ENCODE measurements at regions of chr6 and their contacts with region 1.

Region 1: GRCh38 chr6:34608321-34609091 is 52.4 kb upstream of the SPDEF start:
- DNase-seq: no peak

Region 2: DNA sequence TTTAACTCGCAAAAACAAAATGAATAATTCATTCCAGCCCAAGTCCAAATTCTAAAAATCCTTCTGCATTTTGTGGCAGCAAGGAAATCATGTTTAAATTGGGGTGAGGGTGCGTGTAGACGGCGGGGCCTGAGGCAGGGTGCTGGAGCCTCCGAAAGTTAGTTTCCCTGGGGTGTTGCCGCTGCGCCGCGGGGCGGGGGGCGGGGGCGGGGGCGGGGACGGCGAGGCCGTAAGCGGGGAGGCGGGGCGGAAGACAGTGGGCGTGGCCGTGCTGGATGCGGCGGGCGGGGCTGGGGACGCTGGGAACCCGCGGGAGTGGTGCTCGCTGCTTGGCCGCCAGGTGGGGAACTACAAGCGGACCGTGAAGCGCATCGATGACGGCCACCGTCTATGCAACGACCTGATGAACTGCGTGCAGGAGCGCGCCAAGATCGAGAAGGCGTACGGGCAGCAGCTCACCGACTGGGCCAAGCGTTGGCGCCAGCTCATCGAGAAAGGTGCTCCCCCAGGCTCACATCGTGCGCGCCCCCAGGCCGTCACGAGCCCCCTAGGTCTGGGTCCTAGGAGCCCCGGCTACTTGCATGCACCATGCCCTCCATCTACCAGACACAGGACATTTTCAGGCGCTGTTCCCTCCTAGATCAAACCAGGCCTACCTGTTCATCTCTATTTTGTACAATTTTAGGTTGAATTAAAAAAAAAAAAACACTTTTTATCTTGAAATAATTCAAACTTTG is 81.3 kb before region 1 on chr6:
- intact Hi-C with region 1: loop called (anchors 2 to 5 kb)
- DNase-seq: peak; percentile 98